AG04450 (cell line): ENCODE measurements at regions of chr6 and their contacts with region 1.

Region 1: GRCh38 chr6:82057846-82058554 is 189.5 kb downstream of the IBTK start:
- DNase-seq: peak; percentile 18
- H3K4me3 ChIP-seq: no peak overlapping the region
- H3K27ac ChIP-seq: no peak overlapping the region
- H3K27me3 ChIP-seq: no peaks in the 10 kb centered on the region
- CTCF ChIP-seq: no peak

Region 2: GRCh38 chr6:82040405-82041221 is 17.4 kb before region 1 on chr6:
- CTCF ChIA-PET with region 1: interaction called, 17 read pairs
- POLR2A ChIA-PET with region 1: no interaction called
- DNase-seq: peak; percentile 32
- H3K4me3 ChIP-seq: no peak overlapping the region
- H3K27ac ChIP-seq: no peak overlapping the region
- H3K27me3 ChIP-seq: no peaks in the 10 kb centered on the region
- CTCF ChIP-seq: peak; percentile 93